CD4-positive, alpha-beta memory T cell (primary cell): ENCODE measurements at regions of chr6 and their contacts with region 1.

Region 1: GRCh38 chr6:42978839-42979522 is at the start of gene PEX6:
- DNase-seq: peak; percentile 87 to 98 (median 92)
- H3K4me3 ChIP-seq: peak within 1 kb of the TSS; percentile 70 to 75
- H3K4me3 Mint-ChIP-seq: peak within 1 kb of the TSS; percentile 92 to 99 (median 96)
- H3K27ac ChIP-seq: peak within 1 kb of the TSS; percentile 77
- H3K27ac Mint-ChIP-seq: peak within 1 kb of the TSS; percentile 93 to 99 (median 98)
- H3K4me1 ChIP-seq: peaks cover 56% of the 10 kb centered on the region
- H3K4me1 Mint-ChIP-seq: peaks cover 30 to 63% (median 43%) of the 10 kb centered on the region in 4 donors
- H3K27me3 ChIP-seq: no peaks in the 10 kb centered on the region
- H3K27me3 Mint-ChIP-seq: no peaks in the 10 kb centered on the region
- total RNA-seq, gene PEX6: 38.9 to 40.5 TPM

Region 2: GRCh38 chr6:42963855-42964605 is 15.0 kb before region 1 on chr6:
- CTCF ChIA-PET with region 1: interaction called, 4 read pairs
- POLR2A ChIA-PET with region 1: interaction called, 10 read pairs
- intact Hi-C with region 1: loop called (anchors 1 kb)
- DNase-seq: peak in 3 of 5 donors; percentile 28 to 42 (median 37)
- H3K4me3 ChIP-seq: no peak overlapping the region
- H3K4me3 Mint-ChIP-seq: no peak overlapping the region
- H3K27ac ChIP-seq: no peak overlapping the region
- H3K27ac Mint-ChIP-seq: no peak overlapping the region
- H3K4me1 ChIP-seq: peaks cover 11% of the 10 kb centered on the region
- H3K4me1 Mint-ChIP-seq: peaks cover 7 to 27% (median 11%) of the 10 kb centered on the region in 4 donors
- H3K27me3 ChIP-seq: no peaks in the 10 kb centered on the region
- H3K27me3 Mint-ChIP-seq: no peaks in the 10 kb centered on the region

Region 3: GRCh38 chr6:43013843-43014433 is 35.0 kb after region 1 on chr6 and contains the starts of genes KLHDC3 and MEA1:
- CTCF ChIA-PET with region 1: interaction called, 4 read pairs
- POLR2A ChIA-PET with region 1: interaction called, 73 read pairs
- intact Hi-C with region 1: loop called (anchors 1 kb)
- DNase-seq: peak; percentile 98 to 100 (median 100)
- H3K4me3 ChIP-seq: peak within 1 kb of the TSS; percentile 75 to 84
- H3K4me3 Mint-ChIP-seq: peak within 1 kb of the TSS; percentile 91 to 97 (median 94)
- H3K27ac ChIP-seq: peak within 1 kb of the TSS; percentile 71
- H3K27ac Mint-ChIP-seq: peak within 1 kb of the TSS; percentile 75 to 98 (median 94)
- H3K4me1 ChIP-seq: peaks cover 54% of the 10 kb centered on the region
- H3K4me1 Mint-ChIP-seq: peaks cover 39 to 71% (median 56%) of the 10 kb centered on the region in 4 donors
- H3K27me3 ChIP-seq: no peaks in the 10 kb centered on the region
- H3K27me3 Mint-ChIP-seq: no peaks in the 10 kb centered on the region
- total RNA-seq, gene KLHDC3: 66.6 to 67.9 TPM
- total RNA-seq, gene MEA1: 36.2 to 36.3 TPM

Region 4: GRCh38 chr6:43053545-43054205 is 74.7 kb after region 1 on chr6 and contains the start of gene CUL7:
- CTCF ChIA-PET with region 1: interaction called, 3 read pairs
- POLR2A ChIA-PET with region 1: interaction called, 37 read pairs
- intact Hi-C with region 1: loop called (anchors 1 kb)
- DNase-seq: peak; percentile 86 to 92 (median 88)
- H3K4me3 ChIP-seq: peak within 1 kb of the TSS; percentile 81 to 88
- H3K4me3 Mint-ChIP-seq: peak within 1 kb of the TSS; percentile 92 to 97 (median 94)
- H3K27ac ChIP-seq: peak within 1 kb of the TSS; percentile 85
- H3K27ac Mint-ChIP-seq: peak within 1 kb of the TSS; percentile 94 to 98 (median 97)
- H3K4me1 ChIP-seq: peaks cover 41% of the 10 kb centered on the region
- H3K4me1 Mint-ChIP-seq: peaks cover 22 to 51% (median 44%) of the 10 kb centered on the region in 4 donors
- H3K27me3 ChIP-seq: no peaks in the 10 kb centered on the region
- H3K27me3 Mint-ChIP-seq: no peaks in the 10 kb centered on the region
- total RNA-seq, gene CUL7: 13.7 to 13.9 TPM